Heart right ventricle (tissue), 16 donors: ENCODE measurements at regions of chr9 and their contacts with region 1.

Region 1: DNA sequence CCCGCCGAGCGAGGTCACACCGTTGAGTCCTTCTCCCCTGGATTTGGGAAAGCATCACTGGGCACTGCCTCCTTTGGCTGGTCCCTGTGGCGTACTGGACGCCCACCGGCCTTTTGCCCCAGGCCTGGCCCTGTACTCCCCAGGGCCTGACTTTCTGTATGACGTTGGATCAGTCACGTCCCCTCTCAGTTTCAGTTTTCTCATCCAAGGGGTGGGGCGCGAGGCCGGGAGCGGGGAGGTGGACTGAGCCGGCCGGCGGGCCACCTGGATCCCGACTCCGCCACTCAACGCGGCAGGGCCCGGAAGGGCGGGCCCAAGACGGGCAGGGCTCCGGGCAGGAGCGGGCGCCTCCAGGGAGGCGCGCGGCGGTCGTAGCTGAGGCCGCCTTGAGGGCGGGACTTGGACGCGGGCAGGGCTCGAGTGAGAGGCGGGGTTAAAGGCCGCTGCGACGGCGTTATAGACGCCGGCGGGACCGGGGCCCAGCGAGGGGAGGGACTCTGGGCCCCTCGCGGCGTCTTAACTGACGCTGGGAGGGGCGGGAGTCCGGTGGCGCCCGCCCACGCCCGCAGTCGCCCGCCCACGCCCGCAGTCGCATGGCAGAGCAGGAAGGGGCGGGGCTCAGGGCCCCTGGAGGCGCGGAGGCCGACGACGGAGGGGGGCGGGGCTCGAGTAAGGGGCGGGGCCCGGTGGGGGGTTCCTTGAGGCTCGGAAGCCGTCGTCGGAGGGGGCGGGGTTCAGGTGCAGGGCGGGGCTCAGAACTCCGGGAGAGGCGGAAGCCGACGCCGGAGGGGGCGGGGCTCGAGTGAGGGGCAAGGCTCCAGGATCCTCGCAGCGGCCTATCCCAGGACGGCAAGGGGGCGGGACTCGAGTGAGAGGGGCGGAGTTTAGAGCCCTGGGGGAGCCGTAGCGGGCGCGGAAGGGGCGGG is 549 bp upstream of the CARD19 start:
- DNase-seq: peak; percentile 100
- ATAC-seq: peak; percentile 85 to 94 (median 90)
- H3K4me3 ChIP-seq: peak overlapping the region; percentile 4 to 100 (median 97)
- H3K27ac ChIP-seq: peak overlapping the region; percentile 91 to 99 (median 96)
- H3K4me1 ChIP-seq: peaks cover 18 to 71% (median 59%) of the 10 kb centered on the region in 9 donors
- H3K27me3 ChIP-seq: no peaks in the 10 kb centered on the region
- CTCF ChIP-seq: no peak

Region 2: GRCh38 chr9:92764988-92765936 is 330.2 kb before region 1 on chr9:
- intact Hi-C with region 1: no loop called
- DNase-seq: peak; percentile 98 to 99
- ATAC-seq: peak; percentile 95 to 98 (median 97)
- H3K4me3 ChIP-seq: peak overlapping the region; percentile 50 to 100 (median 82)
- H3K27ac ChIP-seq: peak overlapping the region; percentile 96 to 100 (median 98)
- H3K4me1 ChIP-seq: peaks cover 14 to 67% (median 54%) of the 10 kb centered on the region in 9 donors
- H3K27me3 ChIP-seq: no peaks in the 10 kb centered on the region
- CTCF ChIP-seq: peak; percentile 95 to 99 (median 97)

Region 3: DNA sequence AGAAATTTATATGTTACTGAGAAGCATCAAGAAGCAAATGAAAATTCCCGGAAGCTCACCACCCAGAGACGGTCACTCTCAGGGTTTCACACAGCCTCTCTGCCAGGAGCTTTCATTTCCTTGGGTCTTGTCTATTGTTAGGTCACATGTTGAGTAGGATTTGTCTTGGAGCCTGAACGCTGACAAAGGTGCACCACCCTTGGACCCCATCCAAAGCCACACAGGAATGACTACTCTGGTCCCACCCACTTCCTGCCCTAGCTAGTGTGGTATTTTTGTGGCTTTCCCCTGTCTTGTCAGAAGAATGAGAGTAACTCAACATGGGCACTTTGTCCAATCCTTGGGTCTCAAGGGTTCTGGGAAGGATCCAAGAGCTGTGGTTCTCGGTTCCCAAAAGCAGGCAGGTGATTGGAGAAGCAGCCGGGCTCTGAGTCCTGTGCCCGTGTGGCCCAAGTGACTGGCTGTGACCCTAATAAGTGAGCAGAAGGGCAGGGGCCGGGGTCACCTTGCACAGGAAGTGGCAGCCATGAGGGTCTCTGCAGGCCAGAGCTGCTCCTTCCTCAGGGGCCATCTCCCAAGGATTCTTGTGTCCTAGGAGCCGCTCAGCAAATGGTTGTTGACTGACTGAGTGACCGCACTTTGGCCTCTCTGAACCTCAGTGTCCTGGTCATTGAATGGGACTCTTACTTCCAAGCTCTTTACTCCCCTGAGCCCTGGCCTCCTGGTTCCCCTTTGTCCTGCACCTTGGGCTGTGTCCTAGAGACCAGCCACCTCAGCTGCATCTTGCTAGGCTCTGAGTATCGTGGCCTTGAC is 141.2 kb before region 1 on chr9:
- intact Hi-C with region 1: loop called in 1 of 10 experiments (anchors 5 kb)
- DNase-seq: peak in 1 of 2 donors; percentile 85
- ATAC-seq: peak; percentile 74 to 92 (median 90)
- H3K4me3 ChIP-seq: peak overlapping the region in 3 of 10 donors; percentile 4 to 24 (median 11)
- H3K27ac ChIP-seq: peak overlapping the region; percentile 21 to 80 (median 72)
- H3K4me1 ChIP-seq: peaks cover 2 to 24% (median 13%) of the 10 kb centered on the region in 9 donors
- H3K27me3 ChIP-seq: peaks cover 0 to 53% (median 25%) of the 10 kb centered on the region in 7 donors
- CTCF ChIP-seq: no peak

Region 4: GRCh38 chr9:93051680-93052089 is 43.8 kb before region 1 on chr9:
- intact Hi-C with region 1: loop called in 1 of 10 experiments (anchors 5 kb)
- DNase-seq: peak in 1 of 2 donors; percentile 66
- ATAC-seq: peak in 7 of 8 donors; percentile 75 to 91 (median 85)
- H3K4me3 ChIP-seq: no peak overlapping the region
- H3K27ac ChIP-seq: peak overlapping the region in 8 of 10 donors; percentile 14 to 71 (median 36)
- H3K4me1 ChIP-seq: peaks cover 3 to 22% (median 14%) of the 10 kb centered on the region in 9 donors
- H3K27me3 ChIP-seq: no peaks in the 10 kb centered on the region
- CTCF ChIP-seq: no peak

Region 5: DNA sequence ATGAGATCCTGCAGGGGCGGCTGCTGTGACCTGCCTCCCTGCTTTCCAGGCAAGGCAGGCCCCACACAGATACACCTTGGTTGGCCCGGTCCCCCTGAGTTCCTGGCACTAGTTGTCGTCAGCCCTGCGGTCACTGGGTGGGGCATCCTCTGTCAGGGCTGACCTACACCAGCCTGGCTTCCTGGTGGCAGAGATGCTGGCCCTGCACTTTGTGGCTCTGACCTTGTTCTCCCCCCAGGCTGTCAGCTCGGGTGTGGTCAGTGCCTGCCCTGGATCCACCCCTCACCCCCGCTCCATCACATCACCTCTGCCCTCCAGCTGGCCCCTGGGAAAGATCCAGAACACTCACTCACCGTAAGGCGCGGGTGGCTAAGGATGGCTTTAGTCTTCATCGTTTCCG is 555.0 kb after region 1 on chr9:
- intact Hi-C with region 1: no loop called
- DNase-seq: no peak
- ATAC-seq: no peak
- H3K4me3 ChIP-seq: no peak overlapping the region
- H3K27ac ChIP-seq: no peak overlapping the region
- H3K4me1 ChIP-seq: peaks cover 0 to 4% (median 0%) of the 10 kb centered on the region in 9 donors
- H3K27me3 ChIP-seq: no peaks in the 10 kb centered on the region
- CTCF ChIP-seq: no peak